PC-3 (cell line): ENCODE measurements at regions of chr10 and their contacts with region 1.

Region 1: GRCh38 chr10:66777665-66778064 is 148.2 kb upstream of the LRRTM3 start:
- DNase-seq: peak; percentile 35
- ATAC-seq: peak; percentile 39
- H3K4me3 ChIP-seq: no peak overlapping the region
- H3K27ac ChIP-seq: no peak overlapping the region
- H3K4me1 ChIP-seq: peaks cover 5% of the 10 kb centered on the region; the same call in 1 of the 2 replicates
- H3K27me3 ChIP-seq: no peaks in the 10 kb centered on the region
- CTCF ChIP-seq: no peak

Region 2: GRCh38 chr10:66737241-66737640 is 40.4 kb before region 1 on chr10:
- CTCF ChIA-PET with region 1: no interaction called
- POLR2A ChIA-PET with region 1: no interaction called
- intact Hi-C with region 1: no loop called
- DNase-seq: peak; percentile 42
- ATAC-seq: no peak
- H3K4me3 ChIP-seq: no peak overlapping the region
- H3K27ac ChIP-seq: no peak overlapping the region
- H3K4me1 ChIP-seq: peaks cover 6% of the 10 kb centered on the region
- H3K27me3 ChIP-seq: no peaks in the 10 kb centered on the region
- CTCF ChIP-seq: no peak

Region 3: GRCh38 chr10:66762218-66762729 is 15.4 kb before region 1 on chr10:
- CTCF ChIA-PET with region 1: no interaction called
- POLR2A ChIA-PET with region 1: interaction called, 6 read pairs
- intact Hi-C with region 1: loop called (anchors 1 kb)
- DNase-seq: no peak
- ATAC-seq: no peak
- H3K4me3 ChIP-seq: no peak overlapping the region
- H3K27ac ChIP-seq: no peak overlapping the region
- H3K4me1 ChIP-seq: no peaks in the 10 kb centered on the region
- H3K27me3 ChIP-seq: no peaks in the 10 kb centered on the region
- CTCF ChIP-seq: no peak

Region 4: DNA sequence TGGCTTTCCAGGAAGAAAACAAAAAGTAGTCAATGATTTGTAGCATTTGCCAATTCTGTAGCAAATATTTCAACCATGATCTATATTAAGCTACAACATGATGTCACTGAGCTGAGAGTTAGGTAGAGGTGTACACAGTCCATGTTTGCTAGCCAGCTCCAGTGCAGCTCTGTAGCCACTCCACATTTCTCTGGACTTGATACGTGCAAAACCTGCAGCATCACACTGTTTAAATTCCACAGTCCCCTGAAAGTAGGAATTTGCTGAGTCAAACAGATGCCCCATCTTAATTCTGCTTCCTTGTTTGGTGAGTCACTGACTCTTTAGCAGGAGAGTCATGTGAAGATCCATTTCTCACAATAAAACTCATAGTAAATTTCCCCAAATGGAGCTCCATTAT is 58.4 kb after region 1 on chr10:
- CTCF ChIA-PET with region 1: no interaction called
- POLR2A ChIA-PET with region 1: no interaction called
- intact Hi-C with region 1: no loop called
- DNase-seq: peak; percentile 99
- ATAC-seq: peak; percentile 60
- H3K4me3 ChIP-seq: no peak overlapping the region
- H3K27ac ChIP-seq: peak overlapping the region; percentile 51
- H3K4me1 ChIP-seq: peaks cover 47% of the 10 kb centered on the region
- H3K27me3 ChIP-seq: no peaks in the 10 kb centered on the region
- CTCF ChIP-seq: no peak